ENCODE measurements at regions of chr2 and their contacts with region 1.

Region 1: GRCh38 chr2:197982565-197982964 is 178.2 kb downstream of the PLCL1 start:
- DNase-seq: no peak
- ATAC-seq: no peak
- H3K4me3 ChIP-seq: no peak overlapping the region
- H3K27ac ChIP-seq: no peak overlapping the region
- H3K4me1 ChIP-seq: no peaks in the 10 kb centered on the region; the same call in 1 of the 2 replicates
- H3K27me3 ChIP-seq: peaks cover 3% of the 10 kb centered on the region; the same call in 1 of the 2 replicates
- CTCF ChIP-seq: no peak

Region 2: GRCh38 chr2:197293252-197294007 is 689.1 kb before region 1 on chr2:
- CTCF ChIA-PET with region 1: no interaction called
- POLR2A ChIA-PET with region 1: interaction called, 10 read pairs
- in situ Hi-C with region 1: no loop called
- intact Hi-C with region 1: no loop called
- DNase-seq: no peak
- ATAC-seq: peak; percentile 79
- H3K4me3 ChIP-seq: peak overlapping the region in 1 of 2 experiments; percentile 21; a peak in 2 of 4 replicates
- H3K27ac ChIP-seq: peak overlapping the region; percentile 76
- H3K4me1 ChIP-seq: peaks cover 13% of the 10 kb centered on the region; the same call in 1 of the 2 replicates
- H3K27me3 ChIP-seq: no peaks in the 10 kb centered on the region
- CTCF ChIP-seq: no peak

Region 3: GRCh38 chr2:197851451-197851850 is 131.1 kb before region 1 on chr2:
- CTCF ChIA-PET with region 1: no interaction called
- POLR2A ChIA-PET with region 1: no interaction called
- in situ Hi-C with region 1: no loop called
- intact Hi-C with region 1: no loop called
- DNase-seq: no peak
- ATAC-seq: no peak
- H3K4me3 ChIP-seq: no peak overlapping the region
- H3K27ac ChIP-seq: no peak overlapping the region
- H3K4me1 ChIP-seq: no peaks in the 10 kb centered on the region
- H3K27me3 ChIP-seq: peaks cover 7% of the 10 kb centered on the region
- CTCF ChIP-seq: peak; percentile 9; the same call in 1 of the 2 replicates

Region 4: GRCh38 chr2:197908990-197909776 is 73.4 kb before region 1 on chr2:
- CTCF ChIA-PET with region 1: no interaction called
- POLR2A ChIA-PET with region 1: no interaction called
- in situ Hi-C with region 1: no loop called
- intact Hi-C with region 1: no loop called
- DNase-seq: no peak
- ATAC-seq: no peak
- H3K4me3 ChIP-seq: no peak overlapping the region
- H3K27ac ChIP-seq: no peak overlapping the region
- H3K4me1 ChIP-seq: no peaks in the 10 kb centered on the region
- H3K27me3 ChIP-seq: peaks cover 7% of the 10 kb centered on the region
- CTCF ChIP-seq: no peak